Activated naive CD4-positive, alpha-beta T cell treated with anti-CD3 and anti-CD28 coated beads, Interleukin-2, amount 10 ng/mL, durations not matched to agents 7 days and 5 days (primary cell): ENCODE measurements at regions of chr11 and their contacts with region 1.

Region 1: DNA sequence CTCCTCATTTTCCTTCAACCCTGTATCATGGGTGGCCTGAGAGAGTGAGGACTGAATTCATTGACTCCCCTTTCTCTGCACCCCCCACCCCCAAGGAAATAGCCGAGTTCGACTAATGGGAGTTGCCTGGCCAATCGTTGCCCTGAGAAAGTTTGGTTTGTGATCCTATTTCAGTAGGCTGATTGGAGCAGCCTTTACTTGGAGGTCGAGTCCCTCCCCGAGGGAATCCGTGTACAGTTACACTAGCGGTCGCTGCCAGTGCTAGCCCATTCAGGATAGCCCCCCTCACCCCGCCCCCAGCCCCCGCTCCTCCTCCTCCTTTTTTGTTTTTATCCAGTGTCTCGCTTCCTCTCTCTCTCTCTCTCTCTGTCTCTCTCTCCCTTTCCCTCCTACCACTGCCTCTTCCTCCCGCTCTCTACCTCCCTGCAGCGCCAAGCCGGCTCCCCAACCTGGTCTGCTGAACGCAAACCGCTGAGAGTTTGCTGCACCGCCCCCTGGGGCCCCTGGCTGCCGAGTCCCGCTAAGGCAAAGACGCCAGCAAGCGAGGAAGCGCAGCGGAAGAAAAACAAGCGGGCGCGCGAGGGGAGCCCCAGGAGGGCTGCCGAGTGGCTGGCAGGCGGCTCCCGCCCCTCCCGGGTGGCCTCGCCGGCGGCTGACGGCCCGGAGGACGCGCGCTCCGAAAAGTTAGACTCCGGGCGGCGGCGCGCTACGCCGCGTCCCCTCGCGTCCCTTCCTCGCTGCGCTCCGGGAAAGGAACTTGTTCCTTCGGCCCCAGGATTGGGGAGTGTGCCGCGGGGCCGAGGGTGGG is at the start of gene GRAMD1B:
- DNase-seq: peak; percentile 93
- H3K4me3 Mint-ChIP-seq: peak within 1 kb of the TSS; percentile 86
- H3K27ac Mint-ChIP-seq: peak within 1 kb of the TSS; percentile 93
- H3K4me1 Mint-ChIP-seq: peaks cover 50% of the 10 kb centered on the region
- H3K27me3 Mint-ChIP-seq: no peaks in the 10 kb centered on the region

Region 2: DNA sequence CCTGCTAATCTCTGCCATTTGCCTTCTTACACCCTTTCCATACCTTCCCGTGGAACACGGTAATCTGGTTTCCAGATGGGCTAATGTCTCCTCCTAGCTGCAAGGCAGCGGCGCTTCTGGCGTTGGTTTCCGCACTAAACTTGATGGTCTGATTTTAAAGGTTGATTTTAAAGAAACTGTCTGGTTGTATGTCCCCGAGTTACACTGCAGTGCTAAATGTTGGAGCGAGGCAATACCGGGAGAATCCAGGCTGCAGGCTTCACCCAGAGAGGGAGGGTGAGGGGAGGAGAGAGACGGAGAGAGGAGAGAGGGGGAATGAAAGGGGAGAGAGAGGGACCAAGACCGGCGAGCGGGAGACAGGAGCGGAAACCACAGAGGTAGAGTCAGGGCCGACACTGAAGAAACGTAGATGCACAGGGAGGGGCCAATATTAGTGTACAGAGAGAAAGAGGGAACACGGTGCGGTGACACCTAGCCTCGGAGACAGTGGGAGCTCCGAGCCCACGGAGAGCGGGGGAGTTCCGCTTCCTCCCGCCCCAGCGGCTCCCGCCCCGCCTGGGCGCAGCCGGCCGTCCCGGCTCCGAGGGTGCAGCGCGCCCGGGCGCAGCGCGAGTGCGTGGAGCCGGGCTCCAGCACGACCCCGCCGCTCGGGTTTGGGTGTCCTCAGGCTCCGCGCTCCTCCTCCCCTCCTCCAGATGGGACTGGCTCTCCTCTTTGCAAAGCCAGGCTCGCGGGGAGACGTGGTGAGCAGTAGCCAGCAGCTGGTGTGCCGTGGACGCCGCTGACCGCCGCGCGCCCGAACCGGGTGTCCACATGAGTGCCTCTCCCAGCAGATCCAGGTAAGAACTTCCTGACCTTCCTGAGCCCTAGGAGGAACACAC is 71.9 kb before region 1 on chr11:
- CTCF ChIA-PET with region 1: interaction called, 15 read pairs
- DNase-seq: peak; percentile 66
- H3K4me3 Mint-ChIP-seq: peak overlapping the region; percentile 81
- H3K27ac Mint-ChIP-seq: peak overlapping the region; percentile 78
- H3K4me1 Mint-ChIP-seq: peaks cover 51% of the 10 kb centered on the region
- H3K27me3 Mint-ChIP-seq: peaks cover 42% of the 10 kb centered on the region

Region 3: GRCh38 chr11:123454060-123454651 is 24.0 kb after region 1 on chr11:
- CTCF ChIA-PET with region 1: interaction called, 33 read pairs
- DNase-seq: peak; percentile 71
- H3K4me3 Mint-ChIP-seq: peak overlapping the region; percentile 3
- H3K27ac Mint-ChIP-seq: peak overlapping the region; percentile 82
- H3K4me1 Mint-ChIP-seq: peaks cover 86% of the 10 kb centered on the region
- H3K27me3 Mint-ChIP-seq: no peaks in the 10 kb centered on the region